ENCODE measurements at regions of chr20 and their contacts with region 1.

Region 1: GRCh38 chr20:24910461-24910860 is 38.6 kb upstream of the CST7 start:
- DNase-seq: no peak
- ATAC-seq: no peak
- H3K4me3 ChIP-seq: no peak overlapping the region
- H3K27ac ChIP-seq: no peak overlapping the region
- H3K4me1 ChIP-seq: no peaks in the 10 kb centered on the region
- H3K27me3 ChIP-seq: no peaks in the 10 kb centered on the region
- CTCF ChIP-seq: no peak
- POLR2A ChIP-seq: no peak

Region 2: DNA sequence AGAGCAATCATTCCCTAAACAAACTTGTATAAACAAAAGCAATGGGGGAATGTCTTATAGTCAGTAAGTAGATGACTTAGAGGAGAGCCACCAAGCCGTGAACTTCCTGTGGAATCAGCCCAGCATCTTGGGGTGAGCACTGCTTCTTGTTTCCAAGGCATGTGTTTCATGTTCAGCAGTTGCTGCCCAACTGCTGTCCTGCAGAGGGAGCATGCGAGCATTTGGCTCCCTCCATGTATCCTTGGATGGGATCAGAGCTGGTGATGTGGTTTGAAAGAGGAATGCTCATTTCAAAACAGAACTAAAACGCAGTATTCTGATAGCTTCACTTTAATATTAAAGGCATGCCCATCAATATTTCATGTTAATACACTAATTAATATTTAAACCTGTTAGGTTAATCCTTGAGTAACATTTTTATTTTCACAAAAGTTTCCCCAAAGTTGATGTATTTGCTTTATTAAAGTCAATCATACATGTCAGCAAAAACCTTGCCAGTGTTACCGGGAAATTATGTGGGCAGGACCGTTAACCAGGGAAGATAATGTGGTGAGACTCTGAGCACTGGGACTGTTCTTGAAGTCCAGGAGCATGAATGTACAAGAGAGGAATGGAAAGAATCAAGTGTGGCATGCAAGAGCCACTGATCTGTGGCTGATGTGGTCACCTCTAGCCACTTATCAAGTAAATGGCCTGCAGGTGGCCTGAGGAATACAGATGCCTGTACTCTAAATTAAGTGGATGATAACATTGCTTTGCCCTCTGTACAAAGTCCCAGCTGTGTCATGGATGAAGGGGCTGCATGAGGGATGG is 749.7 kb before region 1 on chr20:
- intact Hi-C with region 1: loop called (anchors 5 kb)
- DNase-seq: peak; percentile 56 to 73 (median 64)
- ATAC-seq: peak; percentile 68
- H3K4me3 ChIP-seq: no peak overlapping the region
- H3K27ac ChIP-seq: no peak overlapping the region
- H3K4me1 ChIP-seq: no peaks in the 10 kb centered on the region
- H3K27me3 ChIP-seq: no peaks in the 10 kb centered on the region
- CTCF ChIP-seq: peak; percentile 59 to 76 (median 69)
- POLR2A ChIP-seq: no peak

Region 3: GRCh38 chr20:24992487-24993205 is 82.2 kb after region 1 on chr20 and contains the start of gene APMAP:
- intact Hi-C with region 1: no loop called
- DNase-seq: peak; percentile 95 to 97 (median 96)
- ATAC-seq: peak; percentile 96
- H3K4me3 ChIP-seq: peak within 1 kb of the TSS; percentile 50 to 79
- H3K27ac ChIP-seq: peak within 1 kb of the TSS; percentile 83 to 96 (median 92)
- H3K4me1 ChIP-seq: peaks cover 36% of the 10 kb centered on the region
- H3K27me3 ChIP-seq: no peaks in the 10 kb centered on the region
- CTCF ChIP-seq: peak in 2 of 7 experiments; percentile 7 to 13
- POLR2A ChIP-seq: peak; percentile 94 to 97 (median 96)
- total RNA-seq, gene APMAP: 38.9 to 51.4 TPM